Ascending aorta (tissue), 2 donors: ENCODE measurements at regions of chr11 and their contacts with region 1.

Region 1: DNA sequence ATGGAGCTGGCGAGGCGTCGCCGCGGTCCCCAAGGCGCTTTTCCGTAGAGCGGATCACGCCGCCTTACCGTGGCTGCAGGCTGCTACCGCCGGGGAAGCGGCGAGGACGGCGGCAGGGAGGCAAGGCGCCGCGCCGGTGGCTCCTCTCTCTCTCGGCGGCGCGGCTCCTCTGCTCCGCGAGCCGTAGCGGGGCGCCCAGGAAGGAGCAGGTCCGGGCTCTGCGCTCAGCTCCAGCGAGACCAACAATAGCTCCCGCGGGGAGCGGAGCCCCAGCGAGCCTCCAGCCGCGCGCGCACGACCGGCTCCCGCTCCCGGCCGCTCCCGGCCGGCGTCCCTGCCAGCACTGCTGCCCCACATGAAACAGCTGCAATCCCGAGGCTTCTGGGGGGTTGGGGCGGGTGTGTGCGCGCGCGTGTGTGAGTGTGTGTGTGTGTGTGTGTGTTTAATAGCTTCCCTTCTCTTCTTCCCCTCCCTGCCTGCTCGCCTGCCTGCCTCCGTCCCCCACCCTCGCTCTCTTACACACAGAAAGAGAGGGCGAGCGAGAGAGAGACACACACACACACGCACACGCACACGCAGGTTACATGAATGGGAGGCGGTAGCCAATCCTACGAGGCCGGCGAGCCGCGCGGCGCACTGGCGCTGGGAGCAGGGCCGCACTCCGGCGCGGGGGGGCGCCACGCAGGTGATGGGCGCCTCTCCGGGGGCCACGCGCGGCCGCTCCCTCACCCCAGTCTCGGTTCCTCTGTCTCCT is at the start of gene TENM4:
- DNase-seq: peak; percentile 36 to 89
- H3K4me3 ChIP-seq: peak within 1 kb of the TSS; percentile 71 to 73
- H3K27ac ChIP-seq: peak within 1 kb of the TSS; percentile 87 to 89
- H3K4me1 ChIP-seq: peaks cover 0 to 8% of the 10 kb centered on the region in 2 donors
- H3K27me3 ChIP-seq: no peaks in the 10 kb centered on the region
- CTCF ChIP-seq: peak in 2 of 3 experiments; percentile 17 to 32
- total RNA-seq, gene TENM4: 11.9 TPM

Region 2: GRCh38 chr11:78698612-78699011 is 742.0 kb before region 1 on chr11:
- intact Hi-C with region 1: loop called (anchors 5 kb)
- DNase-seq: peak; percentile 71 to 95
- H3K4me3 ChIP-seq: no peak overlapping the region
- H3K27ac ChIP-seq: peak overlapping the region; percentile 65 to 77
- H3K4me1 ChIP-seq: peaks cover 6 to 11% of the 10 kb centered on the region in 2 donors
- H3K27me3 ChIP-seq: no peaks in the 10 kb centered on the region
- CTCF ChIP-seq: no peak

Region 3: DNA sequence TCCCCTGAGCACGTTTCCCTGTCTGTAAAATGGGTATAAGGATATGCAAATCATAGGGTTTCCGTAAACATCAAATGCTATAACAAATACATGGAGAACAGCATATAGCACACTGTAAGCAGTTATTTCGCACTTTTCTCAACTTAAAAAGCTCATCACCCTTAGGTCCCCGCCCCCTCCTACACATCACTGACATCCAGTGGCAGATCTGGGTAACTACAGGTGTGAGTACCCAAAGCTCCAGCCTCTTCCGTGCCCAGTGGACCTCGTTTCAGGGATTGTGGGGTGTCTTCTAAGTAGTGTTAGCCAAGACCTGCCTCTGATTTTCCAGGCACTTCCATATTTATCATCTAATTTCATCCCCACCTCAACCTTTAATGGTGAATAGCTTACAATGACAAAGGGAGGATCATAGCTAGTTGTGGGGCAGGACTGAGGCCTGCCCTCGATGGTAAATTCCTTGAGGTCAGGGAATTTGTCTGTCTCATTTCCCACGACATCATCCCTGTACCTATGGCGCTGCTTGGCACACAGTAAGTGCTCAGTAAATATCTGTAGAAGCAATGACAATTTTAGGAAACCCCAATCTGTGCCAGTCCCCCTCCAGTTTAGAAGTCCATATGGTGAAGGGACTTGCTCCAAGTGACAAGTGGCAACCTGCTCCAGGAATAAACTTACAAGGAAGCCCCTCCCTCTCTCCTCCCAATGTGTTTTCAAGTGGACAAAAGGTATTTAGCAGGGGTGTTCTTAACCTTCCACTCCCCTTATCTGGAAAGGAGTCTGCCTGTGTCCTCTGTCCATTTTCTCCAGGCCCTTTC is 340.3 kb before region 1 on chr11:
- intact Hi-C with region 1: loop called (anchors 5 kb)
- DNase-seq: no peak
- H3K4me3 ChIP-seq: no peak overlapping the region
- H3K27ac ChIP-seq: no peak overlapping the region
- H3K4me1 ChIP-seq: peaks cover 0 to 10% of the 10 kb centered on the region in 2 donors
- H3K27me3 ChIP-seq: no peaks in the 10 kb centered on the region
- CTCF ChIP-seq: peak; percentile 53 to 80 (median 70)

Region 4: DNA sequence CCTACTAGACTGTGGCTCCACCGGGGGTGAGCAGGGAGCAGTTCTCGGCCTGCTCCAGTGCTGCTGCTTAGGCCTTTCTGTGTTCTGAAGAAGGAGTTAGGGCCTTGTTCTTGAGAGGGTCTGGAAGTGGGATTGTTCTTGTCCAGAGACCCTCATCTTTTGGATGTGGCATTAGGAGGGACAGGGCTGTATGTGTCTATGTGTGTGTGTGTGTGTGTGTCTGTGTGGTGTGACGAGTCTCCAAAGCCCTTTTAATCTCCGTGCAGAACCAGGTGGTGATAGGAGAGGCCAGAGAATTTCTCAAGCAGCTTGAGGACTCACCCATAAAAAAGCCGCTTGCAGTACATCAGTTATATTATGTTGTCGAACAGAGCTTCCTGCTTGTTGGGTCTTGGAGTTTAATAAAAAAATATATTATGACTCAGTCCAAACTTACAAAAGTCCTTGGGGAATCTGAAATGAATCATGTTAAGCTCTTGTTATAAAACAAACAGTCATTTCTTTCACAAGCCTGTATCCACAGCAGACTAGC is 196.3 kb before region 1 on chr11:
- intact Hi-C with region 1: loop called (anchors 5 kb)
- DNase-seq: peak in 1 of 2 donors; percentile 68
- H3K4me3 ChIP-seq: no peak overlapping the region
- H3K27ac ChIP-seq: peak overlapping the region; percentile 78 to 89
- H3K4me1 ChIP-seq: peaks cover 5 to 23% of the 10 kb centered on the region in 2 donors
- H3K27me3 ChIP-seq: no peaks in the 10 kb centered on the region
- CTCF ChIP-seq: no peak

Region 5: DNA sequence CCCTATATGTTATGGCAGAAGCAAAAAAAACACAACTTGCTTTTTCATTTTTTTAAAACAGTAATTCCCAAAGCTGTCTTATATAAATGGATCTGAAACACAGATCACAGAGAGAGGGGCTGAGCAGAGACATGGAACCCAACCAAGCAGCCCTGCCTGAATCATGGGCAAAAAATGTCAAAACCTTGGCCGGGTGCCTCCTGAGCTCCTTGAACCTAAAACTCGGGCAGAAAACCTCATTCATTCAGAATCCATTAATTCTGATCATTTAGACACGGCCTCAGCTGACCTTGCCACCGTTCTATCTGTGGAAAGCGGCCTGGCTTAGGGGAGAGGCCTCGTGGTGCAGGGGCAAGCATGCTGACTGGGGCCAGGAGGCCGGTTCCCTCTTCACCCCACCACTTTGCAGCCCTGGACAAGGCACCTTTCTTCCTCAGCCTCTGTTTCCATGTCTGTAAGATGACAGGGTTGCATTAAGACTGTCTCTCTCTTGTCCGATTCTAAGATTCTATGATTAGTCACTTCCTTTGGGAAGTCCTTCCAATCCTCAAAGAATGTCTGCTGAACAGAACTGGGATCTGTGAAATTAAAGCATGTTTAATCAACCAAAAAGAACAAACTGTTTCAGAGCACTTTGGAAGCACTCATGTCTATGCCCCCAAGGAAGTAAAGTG is 25.8 kb before region 1 on chr11:
- intact Hi-C with region 1: loop called (anchors 2 kb)
- DNase-seq: peak in 1 of 2 donors; percentile 80
- H3K4me3 ChIP-seq: no peak overlapping the region
- H3K27ac ChIP-seq: peak overlapping the region; percentile 53 to 73
- H3K4me1 ChIP-seq: peaks cover 3 to 22% of the 10 kb centered on the region in 2 donors
- H3K27me3 ChIP-seq: no peaks in the 10 kb centered on the region
- CTCF ChIP-seq: no peak